Ovary (tissue), 10 donors: ENCODE measurements at regions of chr1 and their contacts with region 1.

Region 1: GRCh38 chr1:113835642-113836307 is 23.5 kb upstream of the RSBN1 start:
- DNase-seq: no peak
- H3K4me3 ChIP-seq: no peak overlapping the region
- H3K27ac ChIP-seq: no peak overlapping the region
- H3K4me1 ChIP-seq: no peaks in the 10 kb centered on the region
- H3K27me3 ChIP-seq: no peaks in the 10 kb centered on the region
- CTCF ChIP-seq: peak; percentile 32 to 61 (median 43)
- EP300 ChIP-seq: no peak
- POLR2A ChIP-seq: no peak

Region 2: GRCh38 chr1:113978863-113979702 is 143.3 kb after region 1 on chr1 and contains the start of gene OLFML3:
- intact Hi-C with region 1: loop called in 1 of 4 experiments (anchors 10 kb)
- DNase-seq: peak; percentile 82 to 92 (median 88)
- H3K4me3 ChIP-seq: peak within 1 kb of the TSS; percentile 35
- H3K27ac ChIP-seq: peak within 1 kb of the TSS; percentile 36 to 72
- H3K4me1 ChIP-seq: peaks cover 20% of the 10 kb centered on the region
- H3K27me3 ChIP-seq: no peaks in the 10 kb centered on the region
- CTCF ChIP-seq: peak; percentile 26 to 70 (median 66)
- EP300 ChIP-seq: no peak
- POLR2A ChIP-seq: no peak
- total RNA-seq, gene OLFML3: 69.7 to 157 (median 119) TPM